Natural killer cell (primary cell): ENCODE measurements at regions of chr2 and their contacts with region 1.

Region 1: DNA sequence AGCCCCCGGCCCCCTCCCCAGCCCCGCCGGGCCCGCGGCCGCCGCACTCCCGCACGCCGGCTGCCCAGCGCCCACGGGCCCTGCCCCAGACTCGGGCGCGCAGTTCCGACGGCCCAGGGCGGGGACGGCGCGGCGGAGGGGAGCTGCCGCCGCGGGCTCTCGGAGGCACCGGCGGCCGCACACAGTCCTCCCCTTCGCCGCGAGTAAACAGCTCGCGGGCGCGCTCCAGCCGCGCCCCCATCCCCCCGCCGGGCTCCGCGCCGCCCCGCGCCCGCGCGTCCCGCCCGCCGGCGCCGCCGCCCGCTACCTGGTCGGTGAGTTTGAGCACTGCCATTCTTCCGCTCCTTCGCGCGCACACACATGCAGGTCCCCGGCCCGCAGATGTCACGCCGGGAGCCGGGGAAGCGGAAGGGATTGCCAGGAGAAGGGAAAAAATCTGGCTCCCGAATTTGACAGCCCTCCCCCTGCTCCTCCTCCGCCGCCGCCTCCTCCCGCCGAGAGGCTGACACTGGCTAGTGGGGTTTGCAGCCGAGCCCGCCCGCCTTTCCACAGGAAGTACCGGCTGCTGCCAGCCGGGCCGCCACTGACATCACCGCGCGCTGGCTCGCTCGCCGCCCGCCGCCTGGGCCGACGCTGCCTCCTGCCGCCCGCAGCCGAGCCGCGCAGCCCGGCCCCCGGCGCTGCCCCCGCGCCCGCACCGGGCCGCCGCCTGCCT is at the start of gene ANKRD44:
- DNase-seq: peak; percentile 89 to 93
- ATAC-seq: peak; percentile 76 to 89 (median 86)
- H3K4me3 ChIP-seq: peak within 1 kb of the TSS; percentile 95
- H3K4me3 Mint-ChIP-seq: peak within 1 kb of the TSS; percentile 96
- H3K27ac ChIP-seq: peak within 1 kb of the TSS; percentile 98
- H3K27ac Mint-ChIP-seq: peak within 1 kb of the TSS; percentile 94 to 97
- H3K4me1 ChIP-seq: peaks cover 30% of the 10 kb centered on the region
- H3K4me1 Mint-ChIP-seq: peaks cover 49 to 56% of the 10 kb centered on the region in 2 donors
- H3K27me3 ChIP-seq: no peaks in the 10 kb centered on the region
- H3K27me3 Mint-ChIP-seq: no peaks in the 10 kb centered on the region
- CTCF ChIP-seq: peak; percentile 9
- total RNA-seq, gene ANKRD44: 252 to 376 (median 311) TPM

Region 2: GRCh38 chr2:197113275-197113711 is 197.1 kb before region 1 on chr2:
- intact Hi-C with region 1: loop called (anchors 2 kb)
- DNase-seq: peak in 1 of 2 donors; percentile 71
- ATAC-seq: peak in 2 of 3 donors; percentile 48 to 63
- H3K4me3 ChIP-seq: no peak overlapping the region
- H3K4me3 Mint-ChIP-seq: no peak overlapping the region
- H3K27ac ChIP-seq: no peak overlapping the region
- H3K27ac Mint-ChIP-seq: peak overlapping the region; percentile 43 to 72
- H3K4me1 ChIP-seq: no peaks in the 10 kb centered on the region
- H3K4me1 Mint-ChIP-seq: peaks cover 23 to 27% of the 10 kb centered on the region in 2 donors
- H3K27me3 ChIP-seq: no peaks in the 10 kb centered on the region
- H3K27me3 Mint-ChIP-seq: no peaks in the 10 kb centered on the region
- CTCF ChIP-seq: peak; percentile 80

Region 3: DNA sequence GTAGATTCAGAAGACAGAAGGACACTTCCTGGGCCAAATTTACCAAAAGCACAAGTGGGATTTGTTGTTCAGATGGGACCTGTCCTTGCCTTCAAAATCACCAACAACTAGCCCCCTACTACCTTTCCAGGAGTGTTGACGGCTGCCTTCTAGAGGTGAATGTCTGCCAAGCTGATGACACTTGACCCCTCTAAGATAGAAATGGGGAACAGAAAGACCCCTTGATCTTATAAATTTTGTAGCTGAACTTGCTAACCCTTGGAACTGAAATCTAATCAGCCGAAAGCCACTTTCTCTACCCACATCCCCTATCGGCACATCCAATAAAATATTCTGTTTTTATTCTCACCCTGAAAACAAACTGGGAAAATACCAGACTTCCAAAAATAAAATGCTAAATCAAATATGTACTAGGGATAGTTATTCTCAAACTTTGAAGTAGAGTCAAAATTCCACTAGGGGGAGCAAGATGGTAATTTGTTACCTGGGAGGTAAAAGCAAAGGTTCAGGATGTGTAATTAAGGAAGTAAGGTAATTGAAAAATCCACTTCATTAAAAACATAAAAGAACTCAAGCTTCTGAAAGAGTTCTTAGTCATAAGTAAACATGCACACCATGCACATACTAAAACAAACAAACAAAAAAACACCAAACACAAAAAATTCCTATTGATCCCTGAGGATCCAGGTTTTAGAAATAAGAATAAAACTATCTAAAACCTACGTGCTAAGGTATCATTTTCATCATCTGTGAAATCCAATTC is 119.1 kb before region 1 on chr2:
- intact Hi-C with region 1: loop called (anchors 1 kb)
- DNase-seq: peak in 1 of 2 donors; percentile 86
- ATAC-seq: peak; percentile 56 to 71 (median 59)
- H3K4me3 ChIP-seq: no peak overlapping the region
- H3K4me3 Mint-ChIP-seq: peak overlapping the region; percentile 57
- H3K27ac ChIP-seq: peak overlapping the region; percentile 62
- H3K27ac Mint-ChIP-seq: peak overlapping the region; percentile 85 to 91
- H3K4me1 ChIP-seq: peaks cover 14% of the 10 kb centered on the region
- H3K4me1 Mint-ChIP-seq: peaks cover 79 to 83% of the 10 kb centered on the region in 2 donors
- H3K27me3 ChIP-seq: no peaks in the 10 kb centered on the region
- H3K27me3 Mint-ChIP-seq: no peaks in the 10 kb centered on the region
- CTCF ChIP-seq: peak; percentile 89

Region 4: DNA sequence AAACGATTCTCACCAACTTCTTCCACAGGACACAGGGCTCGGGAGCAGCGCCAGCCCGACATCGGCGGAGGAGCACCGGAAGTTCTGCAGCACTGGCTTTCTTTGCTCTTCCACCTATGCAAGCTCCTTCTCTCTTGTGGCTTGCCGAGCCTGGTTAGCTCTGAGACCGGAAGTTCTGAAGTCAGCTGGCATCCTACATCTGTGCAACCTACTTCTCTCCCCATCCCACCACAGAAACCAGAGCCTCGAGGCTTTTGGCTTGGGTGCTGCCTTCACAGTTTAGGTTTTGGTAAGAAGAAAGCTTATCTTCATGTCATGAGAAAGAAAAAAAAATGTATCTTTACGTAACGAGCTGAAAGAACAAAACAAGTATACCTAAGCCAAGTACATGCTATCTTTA is 111.5 kb before region 1 on chr2:
- intact Hi-C with region 1: loop called (anchors 2 kb)
- DNase-seq: peak; percentile 75 to 97
- ATAC-seq: peak; percentile 80 to 93 (median 93)
- H3K4me3 ChIP-seq: peak overlapping the region; percentile 48
- H3K4me3 Mint-ChIP-seq: peak overlapping the region; percentile 95
- H3K27ac ChIP-seq: peak overlapping the region; percentile 87
- H3K27ac Mint-ChIP-seq: peak overlapping the region; percentile 91 to 98
- H3K4me1 ChIP-seq: peaks cover 55% of the 10 kb centered on the region
- H3K4me1 Mint-ChIP-seq: peaks cover 93 to 94% of the 10 kb centered on the region in 2 donors
- H3K27me3 ChIP-seq: no peaks in the 10 kb centered on the region
- H3K27me3 Mint-ChIP-seq: no peaks in the 10 kb centered on the region
- CTCF ChIP-seq: no peak

Region 5: DNA sequence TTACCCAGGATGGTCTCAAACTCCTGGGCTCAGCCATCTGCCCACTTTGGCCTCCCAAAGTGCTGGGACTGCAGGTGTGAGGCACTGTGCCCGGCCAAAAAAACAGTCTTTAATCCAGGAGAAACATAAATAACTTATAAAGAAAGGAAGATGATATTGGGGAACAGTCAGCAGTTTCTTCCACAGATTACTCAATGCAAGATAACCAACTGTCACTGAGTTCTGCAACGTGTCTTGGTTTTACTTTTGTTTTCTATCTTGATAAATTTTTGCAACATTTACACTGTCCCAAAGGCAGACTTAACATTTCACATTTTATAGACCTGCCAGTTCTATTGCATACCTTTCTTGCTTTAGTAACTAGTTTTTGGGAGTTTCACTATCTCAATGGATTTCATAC is 71.0 kb before region 1 on chr2:
- intact Hi-C with region 1: loop called (anchors 1 kb)
- DNase-seq: peak in 1 of 2 donors; percentile 60
- ATAC-seq: peak; percentile 46 to 73 (median 54)
- H3K4me3 ChIP-seq: peak overlapping the region; percentile 16
- H3K4me3 Mint-ChIP-seq: peak overlapping the region; percentile 84
- H3K27ac ChIP-seq: peak overlapping the region; percentile 90
- H3K27ac Mint-ChIP-seq: peak overlapping the region; percentile 89 to 93
- H3K4me1 ChIP-seq: peaks cover 53% of the 10 kb centered on the region
- H3K4me1 Mint-ChIP-seq: peaks cover 80 to 83% of the 10 kb centered on the region in 2 donors
- H3K27me3 ChIP-seq: no peaks in the 10 kb centered on the region
- H3K27me3 Mint-ChIP-seq: no peaks in the 10 kb centered on the region
- CTCF ChIP-seq: no peak

Region 6: DNA sequence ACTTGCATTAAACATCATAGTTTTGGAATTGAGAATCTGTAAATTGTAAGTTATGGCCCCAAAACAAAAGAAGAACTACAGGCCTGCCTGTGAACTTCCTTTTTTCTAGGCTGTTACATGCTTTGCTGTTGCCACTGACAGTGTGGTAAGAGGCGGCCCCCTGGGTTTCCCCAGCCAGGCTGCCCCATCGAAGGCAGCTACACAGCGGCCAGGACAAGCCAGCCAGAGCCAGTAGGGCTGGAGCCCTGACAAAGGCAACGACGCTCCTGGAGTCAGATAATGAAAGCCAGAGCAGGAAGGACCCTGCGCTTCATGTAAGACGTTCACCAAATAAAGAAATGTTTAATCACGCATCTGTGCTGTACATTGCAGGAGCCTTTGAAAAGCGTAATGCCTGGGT is 54.9 kb before region 1 on chr2:
- intact Hi-C with region 1: loop called (anchors 1 kb)
- DNase-seq: peak; percentile 82 to 90
- ATAC-seq: peak; percentile 87 to 96 (median 94)
- H3K4me3 ChIP-seq: peak overlapping the region; percentile 23
- H3K4me3 Mint-ChIP-seq: peak overlapping the region; percentile 85
- H3K27ac ChIP-seq: peak overlapping the region; percentile 93
- H3K27ac Mint-ChIP-seq: peak overlapping the region; percentile 96 to 99
- H3K4me1 ChIP-seq: peaks cover 49% of the 10 kb centered on the region
- H3K4me1 Mint-ChIP-seq: peaks cover 72 to 73% of the 10 kb centered on the region in 2 donors
- H3K27me3 ChIP-seq: no peaks in the 10 kb centered on the region
- H3K27me3 Mint-ChIP-seq: no peaks in the 10 kb centered on the region
- CTCF ChIP-seq: no peak

Region 7: DNA sequence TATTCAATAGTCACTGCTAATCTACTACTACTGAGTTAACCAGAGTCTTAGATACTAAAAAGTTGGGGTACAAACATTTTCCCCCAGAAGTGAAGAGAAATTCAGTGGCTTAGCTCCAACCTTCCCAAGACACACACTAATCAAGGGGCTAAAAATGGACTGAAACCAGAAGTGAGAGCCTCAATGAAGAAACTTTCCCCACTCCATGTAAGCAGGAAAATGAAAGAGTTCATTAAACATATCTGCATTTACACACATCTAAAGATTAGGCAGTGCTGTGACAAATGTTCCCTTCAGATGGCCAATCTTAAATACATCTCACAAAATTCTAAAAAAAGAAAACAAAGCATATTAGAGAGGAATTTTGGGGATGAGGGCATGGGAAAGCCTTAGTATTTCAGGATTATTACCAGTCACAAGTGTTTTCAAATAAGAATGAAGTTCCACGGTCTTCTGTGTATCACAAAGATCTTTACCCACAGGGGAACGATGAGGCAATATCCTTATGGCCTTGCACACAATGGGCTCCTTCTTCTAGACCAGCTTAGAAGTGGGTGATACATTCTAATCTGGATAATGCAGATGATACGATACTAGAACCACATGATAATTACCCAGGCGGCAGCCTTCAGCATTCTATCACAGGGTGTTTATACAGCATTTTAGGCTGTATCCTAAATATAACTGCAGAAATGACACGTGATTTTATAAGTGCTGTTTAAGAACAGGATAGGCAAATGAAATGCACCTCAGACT is 17.0 kb before region 1 on chr2:
- intact Hi-C with region 1: loop called (anchors 1 kb)
- DNase-seq: peak in 1 of 2 donors; percentile 69
- ATAC-seq: peak; percentile 55 to 80 (median 68)
- H3K4me3 ChIP-seq: peak overlapping the region; percentile 13
- H3K4me3 Mint-ChIP-seq: peak overlapping the region; percentile 74
- H3K27ac ChIP-seq: peak overlapping the region; percentile 92
- H3K27ac Mint-ChIP-seq: peak overlapping the region; percentile 94 to 97
- H3K4me1 ChIP-seq: peaks cover 54% of the 10 kb centered on the region
- H3K4me1 Mint-ChIP-seq: peaks cover 86 to 88% of the 10 kb centered on the region in 2 donors
- H3K27me3 ChIP-seq: no peaks in the 10 kb centered on the region
- H3K27me3 Mint-ChIP-seq: no peaks in the 10 kb centered on the region
- CTCF ChIP-seq: no peak